Motor neuron (in vitro differentiated cells): ENCODE measurements at regions of chr12 and their contacts with region 1.

Region 1: GRCh38 chr12:109606320-109607028 is 32.9 kb downstream of the MVK start:
- ATAC-seq: peak in 5 of 8 experiments; percentile 85 to 87 (median 86)
- H3K4me3 ChIP-seq: peak overlapping the region in 1 of 5 donors; percentile 12
- H3K27ac ChIP-seq: peak overlapping the region; percentile 64 to 73
- H3K4me1 ChIP-seq: peaks cover 29 to 32% of the 10 kb centered on the region in 2 donors

Region 2: DNA sequence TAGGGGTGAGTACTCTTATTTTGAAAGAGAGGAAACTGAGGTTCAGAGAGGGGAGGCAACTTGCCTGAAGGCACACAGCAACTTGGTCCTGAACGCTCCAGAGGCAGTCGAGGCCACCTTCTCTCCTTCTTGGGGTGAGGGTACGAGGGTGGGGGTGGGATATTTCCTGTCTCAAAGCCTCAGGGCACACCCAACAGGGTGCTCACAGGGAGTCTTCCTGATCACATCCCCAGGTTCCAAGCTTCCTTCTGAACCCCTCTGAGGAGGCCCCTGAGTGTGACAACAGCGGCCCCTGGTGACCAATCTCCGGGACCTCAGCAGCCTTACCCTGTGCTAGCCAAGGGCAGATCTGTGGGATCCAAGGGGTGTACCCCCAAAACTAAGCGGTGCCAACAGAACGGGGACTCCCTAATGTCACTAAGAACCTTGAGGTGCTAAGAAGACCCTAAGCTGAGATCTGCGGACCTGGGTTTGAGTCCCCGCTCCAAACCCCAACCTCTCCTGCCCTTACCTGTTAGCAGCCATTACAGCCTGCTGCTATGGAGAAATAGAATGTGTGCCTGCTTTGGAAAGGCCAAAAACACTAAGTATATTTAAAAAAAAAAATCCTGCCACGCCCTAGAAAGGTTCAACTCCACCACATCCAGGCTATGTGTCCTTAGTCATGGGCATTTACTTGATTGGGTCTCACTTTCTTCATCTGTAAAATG is 168.9 kb after region 1 on chr12:
- in situ Hi-C with region 1: loop called in 1 of 9 experiments (anchors 10 kb)
- ATAC-seq: peak; percentile 74 to 95 (median 92)
- H3K4me3 ChIP-seq: no peak overlapping the region
- H3K27ac ChIP-seq: no peak overlapping the region
- H3K4me1 ChIP-seq: no peaks in the 10 kb centered on the region

Region 3: DNA sequence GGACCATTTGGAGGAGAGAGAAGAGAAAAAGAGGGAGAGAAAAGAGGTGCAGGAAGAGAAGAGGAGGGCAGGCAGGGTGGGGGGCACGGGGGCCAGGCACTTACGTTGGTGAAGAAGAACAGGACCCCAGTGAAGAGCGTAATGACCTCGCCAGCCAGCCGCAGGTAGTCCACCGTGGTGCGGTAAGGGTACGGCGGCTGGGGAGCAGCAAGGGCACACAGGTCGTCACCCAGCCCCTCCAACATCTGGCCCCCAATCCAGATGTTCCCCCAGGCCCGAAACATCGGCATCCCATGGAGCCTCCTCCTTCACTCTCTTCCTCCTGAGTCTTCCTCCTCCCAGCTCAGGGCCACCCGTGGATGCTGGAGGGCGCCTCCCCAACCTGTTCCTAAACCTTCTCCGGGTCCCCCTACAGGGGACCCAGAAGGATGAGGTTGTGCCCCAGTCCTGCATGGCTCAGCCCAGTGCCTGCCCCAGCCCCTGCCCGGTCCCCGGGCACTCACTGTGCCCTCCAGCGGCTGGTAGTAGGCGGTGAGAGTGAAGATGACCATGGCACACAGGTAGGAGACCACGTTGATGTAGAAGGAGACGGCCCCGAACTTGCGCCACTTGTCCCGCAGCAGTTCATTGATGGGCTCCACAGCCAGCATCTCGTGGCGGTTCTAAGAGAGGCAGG is 187.5 kb after region 1 on chr12:
- in situ Hi-C with region 1: no loop called
- ATAC-seq: no peak
- H3K4me3 ChIP-seq: no peak overlapping the region
- H3K27ac ChIP-seq: no peak overlapping the region
- H3K4me1 ChIP-seq: peaks cover 5 to 9% of the 10 kb centered on the region in 2 donors